Endothelial cell of umbilical vein (primary cell): ENCODE measurements at regions of chr5 and their contacts with region 1.

Region 1: GRCh38 chr5:120446068-120446492 is 18.0 kb upstream of the PRR16 start:
- DNase-seq: peak; percentile 96
- H3K4me3 ChIP-seq: no peak overlapping the region
- H3K27ac ChIP-seq: peak overlapping the region; percentile 86
- H3K4me1 ChIP-seq: peaks cover 29% of the 10 kb centered on the region
- H3K27me3 ChIP-seq: no peaks in the 10 kb centered on the region
- CTCF ChIP-seq: no peak
- POLR2A ChIP-seq: no peak

Region 2: DNA sequence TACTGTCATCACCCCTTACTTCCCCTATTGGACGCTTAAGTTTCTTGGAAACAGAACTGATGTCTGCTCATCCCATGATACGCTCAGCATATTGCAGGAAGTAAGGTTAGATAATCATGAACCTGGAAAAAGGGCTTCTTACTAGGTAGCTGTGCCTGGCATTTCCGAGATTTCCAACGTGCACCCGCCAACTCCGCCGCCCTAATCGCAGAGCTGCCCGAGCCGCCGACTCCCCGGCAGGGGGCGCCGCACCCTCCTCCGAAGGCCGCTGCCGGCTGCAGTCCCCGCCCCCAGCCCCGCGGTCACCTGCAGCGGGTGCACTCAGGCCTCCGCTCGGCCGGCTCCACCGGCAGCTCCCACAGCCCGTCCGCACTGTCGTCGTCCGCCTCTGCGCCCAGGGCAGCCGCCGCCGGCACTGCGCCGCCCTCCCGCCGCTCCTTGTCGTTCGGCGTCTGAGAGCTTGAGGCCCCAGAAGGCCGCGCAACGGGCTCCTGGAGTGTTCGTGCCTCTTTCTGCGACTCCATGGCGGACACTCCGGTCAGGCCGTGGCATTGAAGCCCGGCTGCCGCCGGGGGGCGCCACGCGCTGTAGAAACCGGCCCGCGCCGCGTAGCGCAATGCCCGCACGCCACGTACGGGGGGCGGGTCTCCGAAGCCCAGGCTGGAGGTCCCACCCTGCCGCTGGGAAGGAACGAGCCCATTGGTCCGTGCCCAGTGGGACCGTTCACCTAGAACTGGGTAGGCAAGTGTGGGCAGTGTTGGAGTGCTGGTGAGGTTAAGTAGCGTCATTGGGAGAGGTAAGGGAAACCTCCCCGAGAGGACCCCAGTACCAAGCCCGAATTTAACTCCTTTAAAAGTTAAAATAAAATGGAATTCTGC is 1457.9 kb before region 1 on chr5 and contains the start of gene DTWD2:
- CTCF ChIA-PET with region 1: no interaction called
- POLR2A ChIA-PET with region 1: no interaction called
- dilution Hi-C with region 1: no loop called
- intact Hi-C with region 1: loop called (anchors 5 kb)
- DNase-seq: peak; percentile 96
- H3K4me3 ChIP-seq: peak within 1 kb of the TSS; percentile 37 to 74 (median 56)
- H3K27ac ChIP-seq: no peak within 1 kb of the TSS
- H3K4me1 ChIP-seq: peaks cover 6% of the 10 kb centered on the region
- H3K27me3 ChIP-seq: peaks cover 0 to 2% of the 10 kb centered on the region in 2 experiments
- CTCF ChIP-seq: peak; percentile 96 to 97
- POLR2A ChIP-seq: no peak
- total RNA-seq, gene DTWD2: 1.1 and 2.3 TPM in 2 replicates

Region 3: DNA sequence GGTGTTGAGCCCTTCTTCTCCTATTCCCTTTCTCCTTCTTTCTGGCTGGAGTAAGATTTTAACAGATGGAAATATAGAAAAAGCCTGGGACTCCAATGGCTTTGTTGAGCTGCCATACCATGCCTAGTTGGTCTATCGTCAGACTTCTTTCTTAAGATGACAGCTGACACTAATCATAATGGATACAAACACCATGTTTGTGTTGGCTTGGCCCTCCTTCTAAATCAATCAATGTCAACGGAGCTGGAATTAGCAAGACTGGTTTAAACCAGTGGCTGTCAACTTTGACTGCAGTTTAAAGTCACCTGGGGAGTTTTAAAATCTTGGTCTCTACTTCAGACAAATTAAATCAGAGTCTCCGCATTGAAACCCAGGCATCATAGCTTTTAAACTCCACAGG is 246.5 kb before region 1 on chr5:
- CTCF ChIA-PET with region 1: no interaction called
- POLR2A ChIA-PET with region 1: no interaction called
- dilution Hi-C with region 1: no loop called
- intact Hi-C with region 1: no loop called
- DNase-seq: no peak
- H3K4me3 ChIP-seq: no peak overlapping the region
- H3K27ac ChIP-seq: no peak overlapping the region
- H3K4me1 ChIP-seq: no peaks in the 10 kb centered on the region
- H3K27me3 ChIP-seq: no peaks in the 10 kb centered on the region
- CTCF ChIP-seq: no peak
- POLR2A ChIP-seq: no peak

Region 4: DNA sequence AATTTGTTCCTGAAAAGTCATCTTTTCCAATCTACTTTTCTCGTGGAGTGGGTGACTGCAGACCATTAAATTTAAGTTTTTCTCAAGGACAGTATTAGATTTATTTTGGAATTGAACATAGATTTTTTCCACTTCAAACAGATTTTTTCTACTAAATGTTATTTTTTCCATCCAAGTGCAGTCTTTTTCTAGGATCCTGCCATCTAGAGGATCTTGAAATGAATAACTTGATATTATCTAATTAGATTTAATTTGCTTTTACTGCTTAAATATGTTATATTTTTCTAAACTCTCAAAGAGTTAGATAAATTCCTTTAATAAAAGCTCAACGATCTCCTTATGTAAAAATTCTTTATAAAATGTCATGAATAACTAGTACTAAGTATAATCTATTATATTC is 118.9 kb before region 1 on chr5:
- CTCF ChIA-PET with region 1: interaction called, 3 read pairs
- POLR2A ChIA-PET with region 1: no interaction called
- dilution Hi-C with region 1: no loop called
- intact Hi-C with region 1: loop called (anchors 5 kb)
- DNase-seq: peak; percentile 6
- H3K4me3 ChIP-seq: no peak overlapping the region
- H3K27ac ChIP-seq: no peak overlapping the region
- H3K4me1 ChIP-seq: no peaks in the 10 kb centered on the region
- H3K27me3 ChIP-seq: no peaks in the 10 kb centered on the region
- CTCF ChIP-seq: no peak
- POLR2A ChIP-seq: no peak

Region 5: DNA sequence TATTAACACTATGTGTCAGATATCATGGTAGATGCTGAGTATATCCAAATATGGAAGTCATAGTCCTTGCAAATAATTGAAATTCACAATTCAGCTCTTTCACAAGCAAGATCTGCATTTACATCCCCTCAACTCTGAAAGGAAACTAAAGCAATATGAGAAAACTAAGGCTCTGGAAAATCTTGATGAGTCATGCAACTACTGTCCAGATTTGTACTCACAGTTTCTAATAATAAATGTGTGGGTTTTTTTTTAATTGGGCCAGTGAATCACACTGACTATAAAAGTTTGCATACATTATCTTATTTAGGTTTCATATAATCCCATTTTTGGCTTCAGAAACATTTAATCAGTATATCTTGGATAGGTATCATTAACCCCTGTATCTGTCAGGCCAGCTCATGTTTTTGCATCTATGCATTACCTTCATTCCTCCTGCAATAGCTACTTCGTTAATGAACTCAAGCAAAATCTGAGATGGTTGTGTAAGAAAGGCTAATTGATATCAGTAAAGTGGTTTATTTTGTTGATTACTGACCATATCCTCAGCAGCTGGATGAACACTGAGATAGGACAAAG is 40.7 kb before region 1 on chr5:
- CTCF ChIA-PET with region 1: interaction called, 3 read pairs
- POLR2A ChIA-PET with region 1: no interaction called
- dilution Hi-C with region 1: no loop called
- intact Hi-C with region 1: loop called (anchors 1 kb)
- DNase-seq: peak; percentile 80
- H3K4me3 ChIP-seq: no peak overlapping the region
- H3K27ac ChIP-seq: peak overlapping the region; percentile 53
- H3K4me1 ChIP-seq: peaks cover 17% of the 10 kb centered on the region
- H3K27me3 ChIP-seq: no peaks in the 10 kb centered on the region
- CTCF ChIP-seq: no peak
- POLR2A ChIP-seq: no peak

Region 6: GRCh38 chr5:120457839-120458507 is 11.9 kb after region 1 on chr5:
- CTCF ChIA-PET with region 1: interaction called, 23 read pairs
- POLR2A ChIA-PET with region 1: no interaction called
- dilution Hi-C with region 1: no loop called
- intact Hi-C with region 1: no loop called
- DNase-seq: peak; percentile 52
- H3K4me3 ChIP-seq: peak overlapping the region in 1 of 3 experiments; percentile 17
- H3K27ac ChIP-seq: no peak overlapping the region
- H3K4me1 ChIP-seq: no peaks in the 10 kb centered on the region
- H3K27me3 ChIP-seq: no peaks in the 10 kb centered on the region
- CTCF ChIP-seq: peak; percentile 45 to 64
- POLR2A ChIP-seq: no peak